Gastrocnemius medialis (tissue), 4 donors: ENCODE measurements at regions of chr13 and their contacts with region 1.

Region 1: DNA sequence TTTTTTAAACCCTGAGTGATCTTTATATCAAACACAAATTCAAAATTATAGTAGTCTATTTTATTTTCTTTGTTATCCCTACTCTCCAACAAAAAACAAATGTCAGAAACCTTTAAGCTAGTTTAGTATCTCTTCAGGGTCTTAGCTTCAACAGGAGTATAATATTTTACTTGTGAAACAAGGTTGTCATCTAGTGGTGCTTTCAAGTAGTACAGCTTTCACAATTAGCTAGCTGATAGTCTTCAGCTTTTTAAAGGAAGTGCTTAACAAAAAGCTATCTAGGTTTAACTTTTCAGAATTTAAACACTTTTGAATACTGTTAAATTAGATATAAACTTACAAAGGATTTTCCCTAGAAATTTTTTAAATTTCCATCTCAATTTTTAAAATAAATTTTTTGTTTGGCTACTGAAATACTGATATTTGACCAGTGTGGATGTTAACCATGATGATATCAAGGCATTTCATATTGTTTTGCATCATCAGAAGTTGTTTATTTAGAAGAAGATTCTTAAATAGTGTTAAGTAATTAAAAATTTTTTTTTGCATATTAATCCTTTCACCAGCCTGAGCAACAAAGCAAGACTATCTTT is 34.2 kb downstream of the TDRD3 start:
- DNase-seq: no peak
- ATAC-seq: peak; percentile 87
- H3K4me3 ChIP-seq: no peak overlapping the region
- H3K27ac ChIP-seq: no peak overlapping the region
- H3K4me1 ChIP-seq: peaks cover 0 to 4% of the 10 kb centered on the region in 2 donors
- H3K27me3 ChIP-seq: no peaks in the 10 kb centered on the region
- CTCF ChIP-seq: peak; percentile 71 to 98 (median 91)
- POLR2A ChIP-seq: no peak

Region 2: DNA sequence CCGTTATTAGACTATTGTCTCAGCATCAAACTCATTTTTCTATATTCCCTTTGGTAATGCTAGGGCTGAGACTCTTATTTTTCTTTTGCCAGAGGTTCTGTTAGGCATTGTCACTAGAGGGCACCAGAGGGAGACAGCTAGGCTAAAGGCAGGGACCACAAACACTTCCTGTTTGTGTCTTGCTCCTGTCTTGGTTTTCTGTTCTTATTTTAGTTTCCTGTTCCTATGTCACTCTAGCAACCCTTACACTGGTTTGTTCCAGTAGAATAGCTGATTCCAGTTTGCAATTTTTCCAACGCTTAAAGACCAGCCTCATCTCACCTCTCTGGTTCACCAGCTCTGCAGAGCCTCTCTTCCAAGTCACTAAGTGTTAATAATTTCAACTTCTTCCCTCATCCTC is 1039.5 kb before region 1 on chr13:
- in situ Hi-C with region 1: loop called in 1 of 4 experiments (anchors 10 kb)
- intact Hi-C with region 1: loop called (anchors 5 kb)
- DNase-seq: peak in 1 of 2 donors; percentile 6
- ATAC-seq: peak; percentile 36 to 47
- H3K4me3 ChIP-seq: no peak overlapping the region
- H3K27ac ChIP-seq: no peak overlapping the region
- H3K4me1 ChIP-seq: peaks cover 0 to 5% of the 10 kb centered on the region in 2 donors
- H3K27me3 ChIP-seq: no peaks in the 10 kb centered on the region
- CTCF ChIP-seq: peak; percentile 40 to 64 (median 48)
- POLR2A ChIP-seq: no peak

Region 3: DNA sequence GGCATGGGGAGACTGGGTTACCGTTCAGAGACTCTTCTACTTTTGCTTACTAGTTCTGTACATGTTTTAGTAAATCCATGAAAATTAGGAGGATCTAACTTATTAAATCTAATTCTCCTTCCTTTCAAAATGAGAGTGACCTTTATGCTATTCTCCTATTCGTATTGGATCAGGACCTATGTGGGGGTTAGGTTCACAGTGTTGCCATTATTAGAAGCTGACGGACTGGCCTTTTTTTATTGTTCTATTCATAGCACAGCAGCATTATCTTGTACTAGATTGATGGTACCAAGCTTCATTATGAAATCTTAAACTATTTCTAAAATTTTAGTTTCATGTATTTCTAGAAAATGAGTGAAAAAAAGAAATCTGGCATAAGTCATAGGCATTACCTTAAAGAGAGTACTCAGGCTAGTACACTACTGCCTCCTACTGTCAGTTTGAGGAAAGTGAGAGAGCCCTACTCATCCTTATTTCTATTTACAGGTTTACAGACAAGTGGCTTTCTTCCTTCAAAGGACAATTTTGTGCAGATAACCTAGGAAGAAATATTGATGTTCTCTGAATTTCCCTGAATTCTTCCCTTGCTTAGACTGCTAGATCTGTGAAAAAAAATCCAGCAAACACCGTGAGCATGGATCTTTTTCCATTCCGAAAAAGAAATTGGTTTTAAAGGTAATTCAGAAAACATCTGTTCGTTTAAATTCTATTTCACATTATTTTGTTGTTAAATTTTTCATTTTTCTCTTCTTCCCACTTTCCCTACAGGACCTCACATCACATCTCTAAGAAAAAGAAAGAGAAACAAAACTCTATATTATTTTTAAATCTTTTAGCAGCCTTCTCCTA is 753.0 kb before region 1 on chr13:
- in situ Hi-C with region 1: loop called in 1 of 4 experiments (anchors 25 kb)
- intact Hi-C with region 1: no loop called
- DNase-seq: no peak
- ATAC-seq: no peak
- H3K4me3 ChIP-seq: peak overlapping the region in 1 of 4 donors; percentile 12
- H3K27ac ChIP-seq: no peak overlapping the region
- H3K4me1 ChIP-seq: peaks cover 13 to 18% of the 10 kb centered on the region in 2 donors
- H3K27me3 ChIP-seq: no peaks in the 10 kb centered on the region
- CTCF ChIP-seq: peak; percentile 25 to 61 (median 47)
- POLR2A ChIP-seq: no peak

Region 4: GRCh38 chr13:60163478-60164233 is 267.5 kb before region 1 on chr13 and contains the start of gene DIAPH3:
- in situ Hi-C with region 1: loop called in 1 of 4 experiments (anchors 25 kb)
- intact Hi-C with region 1: no loop called
- DNase-seq: peak; percentile 91 to 94
- ATAC-seq: peak; percentile 98 to 99
- H3K4me3 ChIP-seq: peak within 1 kb of the TSS; percentile 72 to 78 (median 72)
- H3K27ac ChIP-seq: peak within 1 kb of the TSS; percentile 76 to 86 (median 84)
- H3K4me1 ChIP-seq: peaks cover 15 to 16% of the 10 kb centered on the region in 2 donors
- H3K27me3 ChIP-seq: no peaks in the 10 kb centered on the region
- CTCF ChIP-seq: no peak
- POLR2A ChIP-seq: peak; percentile 35 to 48
- total RNA-seq, gene DIAPH3: 0.13 TPM in 1 of 4 donors, not detected in the others

Region 5: GRCh38 chr13:60379837-60380236 is 51.4 kb before region 1 on chr13:
- in situ Hi-C with region 1: no loop called
- intact Hi-C with region 1: no loop called
- DNase-seq: no peak
- ATAC-seq: no peak
- H3K4me3 ChIP-seq: no peak overlapping the region
- H3K27ac ChIP-seq: no peak overlapping the region
- H3K4me1 ChIP-seq: no peaks in the 10 kb centered on the region
- H3K27me3 ChIP-seq: no peaks in the 10 kb centered on the region
- CTCF ChIP-seq: no peak
- POLR2A ChIP-seq: no peak

Region 6: DNA sequence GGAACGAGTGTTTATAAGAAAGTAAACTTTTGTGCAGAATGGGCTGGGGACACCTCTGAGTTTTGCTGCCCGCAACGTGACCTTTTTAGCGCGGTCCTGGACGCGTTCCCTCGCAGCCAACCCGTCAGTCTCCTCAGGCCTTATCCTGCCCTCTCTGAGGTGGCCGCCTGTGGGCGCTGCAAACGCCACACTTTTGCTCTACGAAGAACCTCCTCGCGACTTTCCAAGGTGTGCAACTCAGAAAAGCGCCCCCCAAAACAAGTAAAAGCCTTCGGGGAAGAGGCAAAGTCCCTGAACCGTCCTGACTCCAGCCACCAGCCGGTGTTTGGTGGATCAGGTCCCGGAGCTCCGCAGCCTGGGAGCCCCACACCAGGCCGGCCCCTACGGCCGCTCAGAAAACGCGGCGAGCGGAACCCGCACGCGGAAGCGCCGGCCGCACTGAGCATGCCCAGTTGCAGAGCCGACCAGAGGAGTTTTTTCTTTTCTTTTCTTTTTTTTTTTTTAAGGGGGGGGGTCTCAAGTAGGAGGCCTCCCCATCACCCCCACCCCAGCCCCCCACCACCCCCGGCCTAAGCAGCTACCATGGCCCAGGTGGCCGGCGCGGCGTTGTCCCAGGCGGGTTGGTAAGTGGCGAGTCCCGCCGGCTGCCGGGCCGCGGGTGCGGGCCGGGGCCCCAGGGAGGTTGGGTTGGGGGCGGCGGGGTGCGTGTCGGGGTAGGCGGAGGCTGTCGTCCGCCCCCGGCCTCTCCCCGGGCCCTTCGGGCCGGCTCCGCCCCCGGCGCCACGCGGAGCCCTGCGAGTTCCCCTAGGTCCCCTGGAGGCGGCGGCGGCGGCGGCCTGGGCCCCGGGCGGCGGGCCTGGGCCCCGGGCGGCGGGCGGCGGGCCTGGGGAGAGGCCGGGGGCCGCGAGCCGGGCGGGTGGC is 34.2 kb before region 1 on chr13 and contains the start of gene TDRD3:
- in situ Hi-C with region 1: no loop called
- intact Hi-C with region 1: loop called (anchors 5 kb)
- DNase-seq: peak; percentile 77 to 85
- ATAC-seq: peak; percentile 83 to 87
- H3K4me3 ChIP-seq: peak within 1 kb of the TSS; percentile 68 to 91 (median 79)
- H3K27ac ChIP-seq: peak within 1 kb of the TSS; percentile 93 to 98 (median 96)
- H3K4me1 ChIP-seq: peaks cover 28 to 37% of the 10 kb centered on the region in 2 donors
- H3K27me3 ChIP-seq: no peaks in the 10 kb centered on the region
- CTCF ChIP-seq: peak; percentile 76 to 93 (median 82)
- POLR2A ChIP-seq: peak; percentile 56 to 72
- total RNA-seq, gene TDRD3: 13.1 to 37.8 (median 17.7) TPM

Region 7: GRCh38 chr13:60612593-60612992 is 181.4 kb after region 1 on chr13:
- in situ Hi-C with region 1: no loop called
- intact Hi-C with region 1: no loop called
- DNase-seq: no peak
- ATAC-seq: no peak
- H3K4me3 ChIP-seq: no peak overlapping the region
- H3K27ac ChIP-seq: no peak overlapping the region
- H3K4me1 ChIP-seq: no peaks in the 10 kb centered on the region
- H3K27me3 ChIP-seq: no peaks in the 10 kb centered on the region
- CTCF ChIP-seq: no peak
- POLR2A ChIP-seq: no peak

Region 8: DNA sequence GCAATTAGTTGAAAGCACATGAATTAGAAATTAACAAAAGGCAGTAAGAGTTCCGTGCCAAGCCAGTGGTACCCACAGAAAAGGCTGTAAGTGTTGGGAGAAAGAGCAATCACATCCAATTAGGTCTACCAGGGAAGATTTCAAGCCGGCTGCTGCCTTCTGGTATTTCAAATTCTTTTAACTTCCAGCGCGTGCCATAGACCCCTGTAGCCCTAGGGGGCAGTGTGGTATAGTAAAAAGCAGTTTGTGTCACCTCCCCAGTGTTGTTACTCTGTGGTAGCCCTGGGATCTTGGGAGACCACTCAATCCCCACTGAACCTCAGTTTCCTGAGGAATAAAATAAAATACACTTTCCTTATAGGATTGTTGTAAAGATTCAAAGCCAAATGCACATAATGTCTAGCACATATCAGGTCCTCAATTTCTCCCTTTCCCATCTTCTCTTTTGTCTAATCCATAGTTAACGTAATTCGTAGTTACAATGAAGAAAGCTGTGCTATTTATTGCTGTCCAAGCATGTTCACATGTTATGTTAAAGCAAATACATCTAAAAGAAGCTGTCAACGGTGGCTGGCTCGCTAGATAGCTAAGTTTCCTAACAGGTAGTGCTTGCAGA is 196.0 kb after region 1 on chr13:
- in situ Hi-C with region 1: no loop called
- intact Hi-C with region 1: no loop called
- DNase-seq: no peak
- ATAC-seq: no peak
- H3K4me3 ChIP-seq: no peak overlapping the region
- H3K27ac ChIP-seq: no peak overlapping the region
- H3K4me1 ChIP-seq: no peaks in the 10 kb centered on the region
- H3K27me3 ChIP-seq: no peaks in the 10 kb centered on the region
- CTCF ChIP-seq: no peak
- POLR2A ChIP-seq: no peak

Region 9: DNA sequence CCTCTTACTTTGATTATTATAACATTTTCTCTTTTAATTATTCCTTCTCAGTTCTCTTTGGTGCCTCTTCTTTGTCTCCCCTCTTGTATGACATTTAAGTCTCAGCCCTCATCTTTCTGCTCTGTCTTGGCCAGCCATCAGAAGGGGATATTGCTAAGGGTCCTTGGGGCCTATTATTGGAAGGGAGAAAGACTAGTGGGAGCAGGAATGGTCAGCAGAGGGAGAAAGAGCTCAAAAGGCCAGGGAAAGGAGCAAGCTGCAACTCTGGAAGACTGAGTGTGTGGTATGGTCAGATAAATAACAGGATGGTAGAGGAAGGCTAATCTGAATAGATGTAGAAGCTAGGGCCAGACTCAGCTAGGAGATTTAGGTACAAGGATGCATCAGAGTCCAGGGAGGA is 302.7 kb after region 1 on chr13:
- in situ Hi-C with region 1: no loop called
- intact Hi-C with region 1: no loop called
- DNase-seq: no peak
- ATAC-seq: no peak
- H3K4me3 ChIP-seq: no peak overlapping the region
- H3K27ac ChIP-seq: no peak overlapping the region
- H3K4me1 ChIP-seq: no peaks in the 10 kb centered on the region
- H3K27me3 ChIP-seq: no peaks in the 10 kb centered on the region
- CTCF ChIP-seq: no peak
- POLR2A ChIP-seq: no peak